ENCODE measurements at regions of chr17 and their contacts with region 1.

Region 1: DNA sequence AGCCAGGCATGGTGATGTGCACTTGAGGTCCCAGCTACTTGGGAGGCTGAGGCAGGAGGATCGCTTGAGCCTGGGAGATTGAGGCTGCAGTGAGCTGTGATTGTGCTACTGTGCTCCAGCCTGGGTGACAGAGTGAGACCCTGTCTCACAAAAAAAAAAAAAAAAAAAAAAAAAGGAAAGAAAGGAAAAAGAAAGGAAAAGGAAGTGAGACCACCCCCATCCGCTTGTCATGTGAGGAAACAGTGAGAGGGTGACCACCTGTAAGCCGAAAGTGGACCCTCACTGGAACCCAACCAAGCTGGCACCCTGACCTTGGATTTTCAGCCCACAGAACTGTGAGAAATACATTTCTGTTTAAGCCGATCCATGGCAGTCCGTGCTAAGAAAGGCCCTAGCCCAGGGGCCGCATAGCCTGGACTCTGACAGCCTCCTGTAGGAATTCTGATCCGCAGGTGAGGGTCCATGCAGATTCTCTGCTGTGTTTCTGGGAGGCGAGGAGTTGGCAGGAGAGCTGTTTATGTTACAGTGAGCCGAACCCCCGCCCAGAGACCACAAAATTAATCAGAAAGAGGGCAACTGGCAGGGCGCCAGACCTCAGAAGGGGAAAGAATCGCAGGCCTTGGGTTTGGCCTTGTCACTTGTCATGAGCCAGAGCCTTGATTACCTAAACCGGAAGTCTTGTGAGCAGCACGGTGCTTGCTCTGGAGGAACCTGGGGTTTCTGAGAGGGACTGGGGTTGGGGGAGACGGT is 945 bp downstream of the SGSH start:
- DNase-seq: peak; percentile 65 to 90 (median 72)
- ATAC-seq: peak; percentile 84
- H3K4me3 ChIP-seq: peak overlapping the region; percentile 51
- H3K27ac ChIP-seq: peak overlapping the region; percentile 51; the same call in 2 of the 3 replicates
- H3K4me1 ChIP-seq: peaks cover 9 to 50% of the 10 kb centered on the region in 2 experiments; a peak in 4 of 5 replicates
- H3K27me3 ChIP-seq: no peaks in the 10 kb centered on the region
- CTCF ChIP-seq: no peak
- EP300 ChIP-seq: peak; percentile 22; the same call in 1 of the 2 replicates
- POLR2A ChIP-seq: no peak; the same call in 1 of the 2 replicates
- RAD21 ChIP-seq: no peak

Region 2: DNA sequence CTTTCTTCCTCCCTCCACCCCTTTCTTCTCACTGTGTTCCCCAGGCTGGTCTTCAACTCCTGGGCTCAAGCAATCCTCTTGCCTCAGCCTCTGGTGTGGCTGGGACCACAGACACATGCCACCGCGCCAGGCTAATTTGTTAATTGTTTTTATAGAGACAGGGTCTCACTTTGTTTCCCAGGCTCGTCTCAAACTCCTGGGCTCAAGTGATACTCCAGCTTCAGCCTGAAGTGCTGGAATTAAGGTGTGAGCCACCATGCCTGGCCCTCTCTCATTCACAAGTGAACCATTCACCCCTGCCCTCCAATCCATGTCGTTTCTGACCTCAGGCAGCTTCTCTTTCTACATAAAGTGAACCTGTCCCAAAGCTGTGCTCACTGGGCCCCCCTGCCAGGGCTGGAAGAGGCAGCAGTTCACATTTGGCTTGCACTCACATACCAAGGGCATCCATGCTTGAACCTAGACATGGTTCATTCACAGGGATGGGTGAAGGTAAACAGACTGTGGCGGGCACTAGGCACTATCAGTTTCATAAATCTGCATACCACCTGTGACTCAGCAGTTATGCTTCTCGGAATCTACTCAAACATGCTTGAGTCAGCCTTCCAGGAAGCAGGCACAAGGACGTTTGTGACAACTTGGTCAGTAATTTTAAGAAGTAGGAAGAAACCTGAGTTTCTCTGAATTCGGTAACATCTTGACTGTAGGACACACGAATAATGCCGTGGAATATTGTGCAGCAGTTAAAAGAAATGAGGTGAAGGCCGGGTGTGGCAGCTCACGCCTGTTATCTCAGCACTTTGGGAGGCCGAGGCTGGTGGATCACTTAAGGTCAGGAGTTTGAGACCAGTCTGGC is 35.4 kb after region 1 on chr17:
- CTCF ChIA-PET with region 1: no interaction called
- POLR2A ChIA-PET with region 1: no interaction called
- in situ Hi-C with region 1: no loop called
- intact Hi-C with region 1: loop called (anchors 2 kb)
- DNase-seq: peak; percentile 70 to 93 (median 74)
- ATAC-seq: peak; percentile 49
- H3K4me3 ChIP-seq: no peak overlapping the region
- H3K27ac ChIP-seq: peak overlapping the region; percentile 97
- H3K4me1 ChIP-seq: peaks cover 60 to 61% of the 10 kb centered on the region in 2 experiments
- H3K27me3 ChIP-seq: no peaks in the 10 kb centered on the region
- CTCF ChIP-seq: no peak
- EP300 ChIP-seq: peak; percentile 93
- POLR2A ChIP-seq: peak; percentile 70
- RAD21 ChIP-seq: peak; percentile 15 to 22; a peak in 3 of 4 replicates

Measured in K562 (cell line).